ENCODE measurements at regions of chr10 and their contacts with region 1.

Region 1: DNA sequence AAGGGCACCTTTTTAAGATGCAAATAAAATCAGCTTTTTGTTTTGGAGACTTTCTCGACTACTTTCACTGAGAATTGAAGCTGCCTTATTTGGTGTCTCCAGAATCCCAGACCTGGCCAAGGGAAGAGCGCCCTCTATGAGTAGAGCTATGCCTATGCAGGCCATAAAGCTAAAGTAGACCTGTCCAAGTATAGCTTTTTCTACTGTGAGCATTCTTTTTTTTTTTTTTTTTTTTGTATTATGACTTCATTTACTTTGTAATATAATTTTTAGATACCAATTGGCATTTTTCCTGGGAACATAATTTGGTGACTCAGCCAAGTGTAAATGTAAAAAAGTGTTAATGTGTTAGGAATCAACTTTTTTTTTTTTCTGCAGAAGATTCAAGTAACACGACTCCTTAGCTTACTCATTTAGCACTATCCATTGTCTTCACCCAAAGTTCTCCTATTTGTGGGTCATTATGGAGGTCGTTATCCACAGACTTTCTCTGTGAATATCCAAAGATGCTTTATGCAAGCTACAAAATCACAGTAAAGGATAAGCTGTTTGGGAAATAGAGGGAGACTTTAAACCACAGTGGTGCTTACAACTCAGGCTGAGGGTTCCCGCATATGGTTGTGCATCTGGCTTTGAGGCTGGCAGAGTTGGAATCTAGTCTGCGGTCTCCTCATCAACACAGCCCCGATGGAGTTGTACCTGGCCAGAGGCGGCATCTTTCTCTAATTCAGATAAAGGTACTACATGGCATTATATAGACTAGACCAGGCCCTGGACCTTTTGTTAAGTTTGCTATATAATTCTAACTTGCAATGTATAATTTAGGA is 1040.2 kb upstream of the SORCS1 start:
- DNase-seq: peak; percentile 76
- ATAC-seq: peak; percentile 73
- H3K4me3 ChIP-seq: no peak overlapping the region
- H3K27ac ChIP-seq: no peak overlapping the region
- H3K4me1 ChIP-seq: no peaks in the 10 kb centered on the region
- H3K27me3 ChIP-seq: no peaks in the 10 kb centered on the region
- CTCF ChIP-seq: peak; percentile 79

Region 2: GRCh38 chr10:107409522-107409921 is 795.2 kb before region 1 on chr10:
- CTCF ChIA-PET with region 1: interaction called, 5 read pairs
- POLR2A ChIA-PET with region 1: no interaction called
- intact Hi-C with region 1: loop called (anchors 5 kb)
- DNase-seq: peak; percentile 49
- ATAC-seq: peak; percentile 67
- H3K4me3 ChIP-seq: no peak overlapping the region
- H3K27ac ChIP-seq: no peak overlapping the region
- H3K4me1 ChIP-seq: no peaks in the 10 kb centered on the region
- H3K27me3 ChIP-seq: no peaks in the 10 kb centered on the region
- CTCF ChIP-seq: peak; percentile 61

Region 3: DNA sequence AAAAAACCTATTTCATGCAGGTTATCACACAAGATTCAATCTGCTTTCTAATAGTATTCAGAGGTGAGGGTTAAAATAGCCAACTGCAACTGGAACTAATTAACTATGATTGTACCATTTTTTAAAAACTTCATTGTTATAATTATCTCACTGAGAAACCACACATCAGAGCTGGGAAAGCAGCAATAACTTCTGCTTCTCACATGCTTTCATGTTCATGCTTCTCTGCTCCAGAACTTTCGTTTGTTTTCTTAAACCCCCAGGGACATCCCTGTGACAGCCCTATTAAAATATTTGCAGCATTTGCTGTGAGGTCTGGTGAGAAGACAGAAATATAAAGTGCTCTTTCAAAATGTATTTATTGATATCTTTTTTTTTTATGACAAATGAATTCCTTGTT is 651.2 kb before region 1 on chr10:
- CTCF ChIA-PET with region 1: no interaction called
- POLR2A ChIA-PET with region 1: no interaction called
- intact Hi-C with region 1: loop called (anchors 10 kb)
- DNase-seq: peak; percentile 15
- ATAC-seq: peak; percentile 53
- H3K4me3 ChIP-seq: no peak overlapping the region
- H3K27ac ChIP-seq: no peak overlapping the region
- H3K4me1 ChIP-seq: no peaks in the 10 kb centered on the region
- H3K27me3 ChIP-seq: no peaks in the 10 kb centered on the region
- CTCF ChIP-seq: no peak

Region 4: DNA sequence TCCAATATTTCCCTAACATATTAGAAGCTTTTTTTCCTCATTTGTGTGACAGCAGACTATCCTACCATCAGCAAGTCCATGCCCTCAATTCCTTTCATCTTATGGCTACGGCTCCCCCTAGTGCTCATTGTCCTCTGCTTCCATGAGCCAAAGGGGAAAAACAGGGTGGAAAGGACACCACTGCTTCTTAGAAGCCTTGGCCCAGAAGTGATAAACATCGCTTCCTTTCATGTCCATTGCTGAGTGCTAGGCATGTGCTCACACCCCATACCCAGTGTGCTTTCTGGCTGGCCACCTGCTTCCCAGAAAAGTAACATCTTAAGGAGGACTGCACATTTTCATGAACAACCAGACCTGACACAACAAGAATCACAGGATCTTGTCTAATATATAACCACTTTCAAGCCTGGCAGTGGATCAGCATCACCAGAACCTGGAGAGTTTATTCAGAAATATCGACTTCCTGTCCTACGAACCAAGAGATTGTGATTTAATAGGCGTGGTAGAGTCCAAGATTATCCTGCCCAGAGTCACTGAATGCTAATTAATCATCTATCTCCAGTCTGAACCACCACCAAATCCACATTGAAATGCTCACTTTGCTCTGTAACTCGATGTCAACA is 389.7 kb before region 1 on chr10:
- CTCF ChIA-PET with region 1: no interaction called
- POLR2A ChIA-PET with region 1: no interaction called
- intact Hi-C with region 1: loop called (anchors 5 kb)
- DNase-seq: peak; percentile 78
- ATAC-seq: peak; percentile 90
- H3K4me3 ChIP-seq: no peak overlapping the region
- H3K27ac ChIP-seq: no peak overlapping the region
- H3K4me1 ChIP-seq: peaks cover 10% of the 10 kb centered on the region
- H3K27me3 ChIP-seq: no peaks in the 10 kb centered on the region
- CTCF ChIP-seq: peak; percentile 84

Region 5: GRCh38 chr10:107914450-107915214 is 290.1 kb before region 1 on chr10:
- CTCF ChIA-PET with region 1: interaction called, 3 read pairs
- POLR2A ChIA-PET with region 1: interaction called, 18 read pairs
- intact Hi-C with region 1: no loop called
- DNase-seq: no peak
- ATAC-seq: peak; percentile 73
- H3K4me3 ChIP-seq: peak overlapping the region; percentile 59
- H3K27ac ChIP-seq: no peak overlapping the region
- H3K4me1 ChIP-seq: 0 out of 2 replicates have a peak, but pooled peaks cover 4% of the 10 kb centered on the region
- H3K27me3 ChIP-seq: no peaks in the 10 kb centered on the region
- CTCF ChIP-seq: no peak

Region 6: GRCh38 chr10:107931815-107932214 is 272.9 kb before region 1 on chr10:
- CTCF ChIA-PET with region 1: no interaction called
- POLR2A ChIA-PET with region 1: no interaction called
- intact Hi-C with region 1: loop called (anchors 5 kb)
- DNase-seq: peak; percentile 22
- ATAC-seq: 0 out of 2 replicates have a peak, but pooled peaks have one; percentile 37
- H3K4me3 ChIP-seq: no peak overlapping the region
- H3K27ac ChIP-seq: no peak overlapping the region
- H3K4me1 ChIP-seq: no peaks in the 10 kb centered on the region
- H3K27me3 ChIP-seq: no peaks in the 10 kb centered on the region
- CTCF ChIP-seq: no peak

Region 7: GRCh38 chr10:108169846-108170245 is 34.8 kb before region 1 on chr10:
- CTCF ChIA-PET with region 1: no interaction called
- POLR2A ChIA-PET with region 1: no interaction called
- intact Hi-C with region 1: no loop called
- DNase-seq: no peak
- ATAC-seq: no peak
- H3K4me3 ChIP-seq: no peak overlapping the region
- H3K27ac ChIP-seq: no peak overlapping the region
- H3K4me1 ChIP-seq: peaks cover 10% of the 10 kb centered on the region; the same call in 1 of the 2 replicates
- H3K27me3 ChIP-seq: no peaks in the 10 kb centered on the region
- CTCF ChIP-seq: no peak

Region 8: DNA sequence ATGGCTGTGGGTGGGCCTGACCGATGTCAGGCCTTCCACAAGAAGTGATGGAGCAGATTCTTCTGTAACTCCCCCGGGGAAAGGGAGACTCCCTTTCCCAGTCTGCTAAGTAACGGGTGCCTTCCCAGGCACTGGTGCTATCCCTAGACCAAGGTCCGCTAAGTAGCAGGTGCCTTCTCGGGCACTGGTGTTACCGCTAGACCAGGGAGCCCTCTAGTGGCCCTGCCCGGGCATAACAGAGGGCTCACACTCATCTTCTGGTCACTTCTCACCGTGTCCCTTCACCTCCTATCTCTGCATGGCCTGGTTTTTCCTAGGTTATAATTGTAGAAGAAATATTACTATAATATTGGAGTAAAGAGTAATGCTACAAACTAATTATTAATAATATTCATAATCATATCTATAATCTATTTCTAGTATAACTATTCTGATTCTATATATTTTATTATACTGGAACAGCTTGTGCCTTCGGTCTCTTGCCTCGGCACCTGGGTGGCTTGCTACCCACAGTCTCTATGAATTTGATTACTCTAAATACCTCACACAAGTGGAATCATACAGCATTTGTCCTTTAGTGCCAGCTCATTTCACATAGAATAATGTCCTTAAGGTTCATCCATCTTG is 339.9 kb after region 1 on chr10:
- CTCF ChIA-PET with region 1: interaction called, 4 read pairs
- POLR2A ChIA-PET with region 1: no interaction called
- intact Hi-C with region 1: loop called (anchors 10 kb)
- DNase-seq: peak; percentile 77
- ATAC-seq: peak; percentile 82
- H3K4me3 ChIP-seq: no peak overlapping the region
- H3K27ac ChIP-seq: no peak overlapping the region
- H3K4me1 ChIP-seq: no peaks in the 10 kb centered on the region
- H3K27me3 ChIP-seq: no peaks in the 10 kb centered on the region
- CTCF ChIP-seq: peak; percentile 68